Heart left ventricle (tissue), 16 donors: ENCODE measurements at regions of chr3 and their contacts with region 1.

Region 1: GRCh38 chr3:98732286-98733052 is 30.7 kb upstream of the ST3GAL6 start:
- DNase-seq: peak; percentile 69 to 83 (median 72)
- ATAC-seq: peak; percentile 39 to 80 (median 64)
- H3K4me3 ChIP-seq: peak overlapping the region; percentile 66 to 99 (median 90)
- H3K27ac ChIP-seq: peak overlapping the region; percentile 80 to 98 (median 92)
- H3K4me1 ChIP-seq: peaks cover 0 to 40% (median 17%) of the 10 kb centered on the region in 12 donors
- H3K27me3 ChIP-seq: no peaks in the 10 kb centered on the region
- CTCF ChIP-seq: peak in 1 of 12 donors; percentile 3
- POLR2A ChIP-seq: peak in 1 of 2 donors; percentile 65

Region 2: GRCh38 chr3:98449606-98450193 is 282.8 kb before region 1 on chr3:
- intact Hi-C with region 1: no loop called
- DNase-seq: no peak
- ATAC-seq: no peak
- H3K4me3 ChIP-seq: no peak overlapping the region
- H3K27ac ChIP-seq: no peak overlapping the region
- H3K4me1 ChIP-seq: no peaks in the 10 kb centered on the region
- H3K27me3 ChIP-seq: no peaks in the 10 kb centered on the region
- CTCF ChIP-seq: no peak
- POLR2A ChIP-seq: no peak

Region 3: GRCh38 chr3:98692787-98693473 is 39.5 kb before region 1 on chr3:
- intact Hi-C with region 1: loop called in 2 of 10 experiments (anchors 2 to 5 kb)
- DNase-seq: peak in 2 of 5 donors; percentile 40 to 52
- ATAC-seq: peak in 3 of 4 donors; percentile 89 to 91 (median 91)
- H3K4me3 ChIP-seq: no peak overlapping the region
- H3K27ac ChIP-seq: peak overlapping the region in 9 of 12 donors; percentile 43 to 79 (median 64)
- H3K4me1 ChIP-seq: peaks cover 0 to 14% (median 0%) of the 10 kb centered on the region in 12 donors
- H3K27me3 ChIP-seq: no peaks in the 10 kb centered on the region
- CTCF ChIP-seq: no peak
- POLR2A ChIP-seq: no peak

Region 4: GRCh38 chr3:98764472-98764884 is 32.0 kb after region 1 on chr3:
- intact Hi-C with region 1: loop called in 3 of 10 experiments (anchors 2 to 5 kb)
- DNase-seq: no peak
- ATAC-seq: peak in 2 of 4 donors; percentile 43 to 45
- H3K4me3 ChIP-seq: peak overlapping the region in 7 of 12 donors; percentile 4 to 55 (median 13)
- H3K27ac ChIP-seq: peak overlapping the region in 11 of 12 donors; percentile 6 to 82 (median 66)
- H3K4me1 ChIP-seq: peaks cover 7 to 98% (median 86%) of the 10 kb centered on the region in 12 donors
- H3K27me3 ChIP-seq: no peaks in the 10 kb centered on the region
- CTCF ChIP-seq: no peak
- POLR2A ChIP-seq: no peak

Region 5: GRCh38 chr3:98770261-98771039 is 38.0 kb after region 1 on chr3:
- intact Hi-C with region 1: loop called in 7 of 10 experiments (anchors 2 to 5 kb)
- DNase-seq: peak in 4 of 5 donors; percentile 50 to 76 (median 56)
- ATAC-seq: peak; percentile 9 to 74 (median 55)
- H3K4me3 ChIP-seq: no peak overlapping the region
- H3K27ac ChIP-seq: peak overlapping the region in 10 of 12 donors; percentile 22 to 77 (median 51)
- H3K4me1 ChIP-seq: peaks cover 2 to 65% (median 44%) of the 10 kb centered on the region in 12 donors
- H3K27me3 ChIP-seq: no peaks in the 10 kb centered on the region
- CTCF ChIP-seq: no peak
- POLR2A ChIP-seq: no peak

Region 6: DNA sequence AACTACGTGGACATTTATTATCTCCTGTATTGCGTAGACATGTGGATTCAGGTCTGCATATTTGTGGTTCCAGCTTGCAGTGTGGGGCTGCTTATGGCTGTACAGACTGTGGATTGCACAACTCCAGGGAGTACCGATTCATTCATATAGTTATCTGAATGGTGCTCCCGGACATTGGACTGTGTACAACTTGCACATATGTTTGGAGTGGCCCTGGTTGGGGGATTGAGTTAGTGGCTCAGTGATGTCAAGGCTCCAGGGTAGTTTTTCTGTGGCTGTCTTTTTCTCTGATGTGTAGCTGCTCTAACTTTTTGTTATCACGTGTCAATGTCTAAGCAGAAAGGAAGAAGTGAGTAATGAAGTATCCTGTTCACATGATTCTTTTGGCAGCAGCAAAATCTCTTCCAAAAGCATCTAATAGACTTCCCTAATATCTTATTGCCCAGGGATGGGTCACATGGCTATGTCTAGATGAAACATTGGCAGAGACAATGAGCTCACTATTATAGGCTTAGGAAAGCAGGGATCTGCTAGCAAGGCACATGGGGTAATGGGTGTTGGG is 46.5 kb after region 1 on chr3:
- intact Hi-C with region 1: loop called in 4 of 10 experiments (anchors 5 kb)
- DNase-seq: no peak
- ATAC-seq: peak; percentile 44 to 80 (median 75)
- H3K4me3 ChIP-seq: no peak overlapping the region
- H3K27ac ChIP-seq: peak overlapping the region in 11 of 12 donors; percentile 24 to 79 (median 49)
- H3K4me1 ChIP-seq: peaks cover 0 to 60% (median 44%) of the 10 kb centered on the region in 12 donors
- H3K27me3 ChIP-seq: no peaks in the 10 kb centered on the region
- CTCF ChIP-seq: no peak
- POLR2A ChIP-seq: no peak

Region 7: DNA sequence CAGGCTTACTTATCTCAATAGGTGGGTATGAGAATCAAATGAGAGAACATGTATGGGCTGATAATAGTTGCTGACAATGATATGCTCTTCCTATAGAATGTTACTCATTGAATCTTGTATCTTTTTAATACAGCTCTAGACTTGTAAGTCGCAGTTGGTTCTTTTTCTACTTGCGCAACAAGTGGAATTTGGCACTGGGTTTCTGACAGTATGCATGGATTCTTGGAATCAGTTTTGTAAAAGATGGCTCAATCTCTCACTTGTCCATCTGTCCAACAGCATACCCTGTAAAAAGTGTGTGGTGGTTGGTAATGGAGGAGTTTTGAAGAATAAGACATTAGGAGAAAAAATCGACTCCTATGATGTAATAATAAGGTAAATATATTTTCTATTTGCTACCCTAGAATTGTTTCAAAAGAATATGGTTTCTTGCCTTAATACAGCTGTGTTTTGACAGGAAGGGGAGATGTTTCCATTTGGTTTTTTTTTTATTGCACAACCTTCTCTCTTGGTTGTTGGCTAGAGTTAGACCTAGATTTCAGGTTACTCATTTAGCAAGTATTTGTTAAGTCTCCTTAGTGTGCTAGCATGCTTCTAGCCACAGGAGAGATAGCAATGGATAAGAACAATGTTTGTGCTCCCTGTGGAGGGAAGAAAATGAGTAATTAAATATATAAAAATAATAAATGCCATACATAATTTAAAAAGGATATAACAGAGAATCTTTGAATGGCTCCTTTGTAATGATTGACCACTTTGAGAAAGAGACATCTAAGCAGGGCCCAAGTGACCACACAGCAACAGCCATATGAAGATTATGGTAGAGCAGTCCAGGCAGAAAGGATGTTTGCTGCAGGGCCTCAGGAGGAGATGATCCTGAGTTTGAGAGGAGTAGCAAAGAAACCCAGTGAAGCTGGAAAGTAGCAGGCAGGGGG is 52.5 kb after region 1 on chr3:
- intact Hi-C with region 1: loop called in 5 of 10 experiments (anchors 5 to 10 kb)
- DNase-seq: no peak
- ATAC-seq: peak in 3 of 4 donors; percentile 31 to 74 (median 50)
- H3K4me3 ChIP-seq: no peak overlapping the region
- H3K27ac ChIP-seq: peak overlapping the region; percentile 29 to 79 (median 52)
- H3K4me1 ChIP-seq: peaks cover 0 to 62% (median 48%) of the 10 kb centered on the region in 12 donors
- H3K27me3 ChIP-seq: no peaks in the 10 kb centered on the region
- CTCF ChIP-seq: no peak
- POLR2A ChIP-seq: no peak

Region 8: GRCh38 chr3:98798820-98799219 is 66.4 kb after region 1 on chr3:
- intact Hi-C with region 1: loop called in 1 of 10 experiments (anchors 10 kb)
- DNase-seq: no peak
- ATAC-seq: peak in 3 of 4 donors; percentile 44 to 50 (median 49)
- H3K4me3 ChIP-seq: no peak overlapping the region
- H3K27ac ChIP-seq: no peak overlapping the region
- H3K4me1 ChIP-seq: no peaks in the 10 kb centered on the region
- H3K27me3 ChIP-seq: no peaks in the 10 kb centered on the region
- CTCF ChIP-seq: peak in 6 of 12 donors; percentile 20 to 44 (median 32)
- POLR2A ChIP-seq: no peak